GM12878 (cell line): ENCODE measurements at regions of chr15 and their contacts with region 1.

Region 1: GRCh38 chr15:65318870-65319356 is 14.4 kb downstream of the RNU5B-1 start:
- DNase-seq: no peak
- ATAC-seq: peak; percentile 99
- H3K4me3 ChIP-seq: no peak overlapping the region
- H3K27ac ChIP-seq: no peak overlapping the region
- H3K4me1 ChIP-seq: no peaks in the 10 kb centered on the region
- H3K27me3 ChIP-seq: peaks cover 0 to 2% of the 10 kb centered on the region in 2 experiments; a peak in 3 of 4 replicates
- CTCF ChIP-seq: peak; percentile 78 to 95 (median 85)
- EP300 ChIP-seq: no peak
- POLR2A ChIP-seq: no peak
- RAD21 ChIP-seq: peak; percentile 87

Region 2: DNA sequence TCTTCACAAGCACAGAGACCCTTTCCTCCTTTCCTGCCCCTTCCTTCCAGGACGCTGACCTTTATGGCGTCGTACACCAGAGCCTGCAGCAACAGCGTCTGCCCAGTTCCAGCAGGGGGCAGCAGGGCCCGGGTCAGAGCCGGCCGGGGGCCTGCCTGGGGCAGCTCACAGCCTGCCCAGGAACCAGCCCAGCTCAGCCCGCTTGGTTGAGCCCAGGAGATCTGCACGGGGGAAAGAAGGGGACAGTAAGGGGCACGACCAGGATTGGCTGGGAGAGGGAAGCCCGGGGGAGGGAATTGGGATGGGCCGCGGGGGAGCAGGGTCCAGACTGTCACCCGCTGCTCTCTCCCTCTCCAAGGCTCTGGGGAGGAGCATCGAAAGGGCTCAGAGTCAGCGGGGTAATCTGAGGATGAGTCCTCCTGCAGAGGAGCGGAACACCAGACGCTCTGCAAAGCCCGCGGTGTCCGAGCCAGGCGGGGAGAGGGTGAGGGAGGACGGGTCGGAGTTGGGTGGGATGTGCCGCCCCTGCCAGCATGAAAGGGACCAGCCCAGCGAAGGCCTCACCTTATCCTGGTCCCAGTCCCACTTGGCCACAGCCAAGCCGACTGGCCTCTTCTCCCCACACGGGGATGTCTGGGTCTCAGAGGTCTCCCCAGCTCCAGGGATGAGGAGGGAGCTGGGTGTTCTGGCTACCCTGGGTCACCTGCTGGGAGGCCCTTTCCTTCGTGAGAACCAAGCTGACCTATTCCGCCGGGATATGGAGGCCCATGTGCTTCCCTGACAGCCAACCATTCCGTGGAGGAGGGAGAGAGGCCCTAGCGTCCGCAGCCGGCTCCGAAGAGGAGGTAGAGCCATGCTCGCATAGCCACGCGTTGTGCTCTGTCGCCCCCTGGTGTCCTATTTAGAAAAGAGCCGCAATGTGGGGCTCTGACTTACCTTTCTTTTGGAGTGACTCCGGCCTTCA is 66.3 kb after region 1 on chr15:
- CTCF ChIA-PET with region 1: interaction called, 105 read pairs
- POLR2A ChIA-PET with region 1: interaction called, 3 read pairs
- RAD21 ChIA-PET with region 1: interaction called, 35 read pairs
- SMC1A ChIA-PET with region 1: interaction called, 31 read pairs
- in situ Hi-C with region 1: loop called (anchors 5 kb)
- intact Hi-C with region 1: loop called (anchors 1 kb)
- DNase-seq: no peak
- ATAC-seq: peak; percentile 96
- H3K4me3 ChIP-seq: no peak overlapping the region
- H3K27ac ChIP-seq: no peak overlapping the region
- H3K4me1 ChIP-seq: peaks cover 7% of the 10 kb centered on the region
- H3K27me3 ChIP-seq: peaks cover 1 to 3% of the 10 kb centered on the region in 2 experiments; a peak in 3 of 4 replicates
- CTCF ChIP-seq: peak; percentile 87 to 95 (median 89)
- EP300 ChIP-seq: no peak
- POLR2A ChIP-seq: no peak
- RAD21 ChIP-seq: peak; percentile 86

Region 3: GRCh38 chr15:65395567-65396185 is 76.8 kb after region 1 on chr15:
- CTCF ChIA-PET with region 1: interaction called, 34 read pairs
- POLR2A ChIA-PET with region 1: no interaction called
- RAD21 ChIA-PET with region 1: interaction called, 14 read pairs
- SMC1A ChIA-PET with region 1: interaction called, 5 read pairs
- in situ Hi-C with region 1: no loop called
- intact Hi-C with region 1: no loop called
- DNase-seq: no peak
- ATAC-seq: no peak
- H3K4me3 ChIP-seq: no peak overlapping the region
- H3K27ac ChIP-seq: no peak overlapping the region
- H3K4me1 ChIP-seq: no peaks in the 10 kb centered on the region
- H3K27me3 ChIP-seq: peaks cover 4% of the 10 kb centered on the region in 2 experiments
- CTCF ChIP-seq: no peak
- EP300 ChIP-seq: no peak
- POLR2A ChIP-seq: no peak
- RAD21 ChIP-seq: no peak